MCF 10A (cell line): ENCODE measurements at regions of chr20 and their contacts with region 1.

Region 1: GRCh38 chr20:56574531-56575142 is 41.6 kb downstream of the FAM209B start:
- DNase-seq: peak; percentile 92
- H3K4me3 Mint-ChIP-seq: no peak overlapping the region
- H3K27ac Mint-ChIP-seq: peak overlapping the region; percentile 71
- H3K4me1 Mint-ChIP-seq: peaks cover 18% of the 10 kb centered on the region
- H3K27me3 Mint-ChIP-seq: no peaks in the 10 kb centered on the region
- CTCF ChIP-seq: no peak

Region 2: DNA sequence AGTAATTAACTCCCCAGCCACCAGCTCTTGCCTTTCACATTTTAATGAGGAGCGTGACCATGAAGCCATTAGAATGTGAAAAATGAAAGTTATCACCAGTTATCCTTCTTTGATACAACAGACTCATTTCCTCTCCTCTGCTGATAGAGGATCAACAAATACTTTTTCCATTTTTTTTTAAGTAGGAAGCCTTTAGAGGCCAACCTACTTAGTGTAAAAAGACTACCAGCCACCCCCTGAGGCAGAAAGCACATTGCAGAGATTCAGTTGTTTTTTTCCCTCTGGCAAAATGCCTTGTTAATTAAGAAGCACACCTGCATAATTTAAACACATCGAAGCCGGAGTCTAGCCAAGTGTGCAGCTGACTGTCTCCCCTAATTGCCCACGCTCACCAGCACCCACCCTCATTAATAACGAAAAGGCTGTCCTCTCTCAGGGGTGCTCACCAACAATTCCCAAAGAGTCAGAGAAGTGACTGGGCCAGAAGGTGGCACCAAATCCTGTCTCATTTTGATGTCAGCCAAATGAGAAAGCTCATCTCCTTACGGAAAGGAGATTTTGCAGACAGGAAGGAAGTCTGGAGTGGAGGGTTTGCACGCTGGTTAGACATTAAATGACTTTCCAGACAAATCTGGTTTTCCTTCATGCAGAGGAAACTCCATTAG is 387.0 kb before region 1 on chr20:
- CTCF ChIA-PET with region 1: interaction called, 8 read pairs
- POLR2A ChIA-PET with region 1: no interaction called
- intact Hi-C with region 1: loop called (anchors 5 kb)
- DNase-seq: peak; percentile 62
- H3K4me3 Mint-ChIP-seq: no peak overlapping the region
- H3K27ac Mint-ChIP-seq: no peak overlapping the region
- H3K4me1 Mint-ChIP-seq: peaks cover 6% of the 10 kb centered on the region
- H3K27me3 Mint-ChIP-seq: no peaks in the 10 kb centered on the region
- CTCF ChIP-seq: peak; percentile 48

Region 3: DNA sequence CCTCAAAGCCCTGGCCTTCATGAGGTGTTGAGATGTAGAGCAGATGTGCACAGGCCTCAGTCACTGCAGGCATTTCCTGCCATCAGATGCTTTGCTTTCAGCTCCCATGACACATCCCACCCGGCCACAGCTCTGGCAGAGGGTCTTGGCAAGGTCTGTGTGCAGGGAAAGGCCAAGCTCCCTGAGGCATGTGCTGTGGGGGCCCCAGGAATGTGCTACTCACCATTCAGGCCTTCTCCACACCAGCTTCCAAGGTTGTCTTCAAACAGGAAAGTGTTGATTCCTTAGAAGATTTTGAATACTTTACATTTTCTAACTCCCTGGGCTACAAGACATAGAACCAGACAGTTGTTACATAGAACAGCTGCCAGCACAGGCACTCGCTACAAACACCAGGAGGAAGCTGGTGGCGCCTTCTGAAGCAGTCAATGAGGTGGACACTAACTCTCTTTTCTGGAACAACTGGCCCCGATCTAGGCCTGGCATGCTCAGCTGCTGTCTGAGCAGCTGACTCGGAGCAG is 134.8 kb before region 1 on chr20:
- CTCF ChIA-PET with region 1: no interaction called
- POLR2A ChIA-PET with region 1: no interaction called
- intact Hi-C with region 1: no loop called
- DNase-seq: no peak
- H3K4me3 Mint-ChIP-seq: no peak overlapping the region
- H3K27ac Mint-ChIP-seq: no peak overlapping the region
- H3K4me1 Mint-ChIP-seq: no peaks in the 10 kb centered on the region
- H3K27me3 Mint-ChIP-seq: no peaks in the 10 kb centered on the region
- CTCF ChIP-seq: no peak